ENCODE measurements at regions of chr1 and their contacts with region 1.

Region 1: DNA sequence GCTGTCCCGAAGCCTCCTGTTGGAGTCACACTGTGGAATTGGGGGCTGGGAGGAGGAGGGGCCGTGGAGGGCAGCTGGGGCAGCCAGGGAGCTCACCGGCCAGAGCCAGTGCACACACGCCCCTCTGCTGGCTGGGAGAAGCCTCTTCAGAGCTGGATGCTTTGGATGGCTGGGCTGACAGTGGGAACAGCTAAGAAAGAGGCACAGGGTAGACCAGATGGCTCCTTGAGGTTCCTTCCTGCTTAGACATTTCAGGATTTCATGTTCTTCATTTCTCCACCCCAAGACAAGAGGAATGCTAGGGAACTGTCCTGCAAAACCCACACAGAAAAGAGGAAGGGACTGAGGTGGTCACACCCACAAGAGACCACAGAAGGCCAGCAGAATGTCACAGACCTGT is 254.8 kb upstream of the VAMP3 start:
- DNase-seq: no peak
- ATAC-seq: peak; percentile 55

Region 2: GRCh38 chr1:7290971-7291970 is 225.1 kb before region 1 on chr1:
- intact Hi-C with region 1: loop called (anchors 2 kb)
- DNase-seq: peak; percentile 67
- ATAC-seq: peak; percentile 85

Region 3: DNA sequence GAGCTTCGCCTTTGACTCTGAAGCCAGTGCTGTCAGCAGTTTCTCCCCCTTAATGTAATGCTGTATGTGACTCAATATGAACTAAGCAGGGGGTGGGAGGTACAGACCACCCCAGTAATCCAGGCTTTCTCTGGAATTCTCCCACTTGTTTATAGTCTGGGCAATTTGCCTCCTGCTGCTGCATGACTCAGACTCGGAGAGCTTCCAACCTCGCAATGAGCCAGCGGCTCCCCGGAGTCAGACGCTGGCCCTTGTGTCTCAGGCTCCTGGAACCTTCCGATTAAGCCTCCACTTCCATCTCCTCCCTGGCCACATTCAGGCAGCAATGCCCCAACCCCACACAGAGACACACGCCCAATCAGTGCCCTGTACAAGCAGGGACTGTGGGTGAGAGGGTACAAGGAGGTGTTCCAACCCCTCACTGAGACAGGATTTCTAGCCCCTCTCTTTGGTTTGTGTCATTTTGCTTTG is 217.0 kb before region 1 on chr1:
- intact Hi-C with region 1: loop called (anchors 2 kb)
- DNase-seq: no peak
- ATAC-seq: peak; percentile 87

Region 4: DNA sequence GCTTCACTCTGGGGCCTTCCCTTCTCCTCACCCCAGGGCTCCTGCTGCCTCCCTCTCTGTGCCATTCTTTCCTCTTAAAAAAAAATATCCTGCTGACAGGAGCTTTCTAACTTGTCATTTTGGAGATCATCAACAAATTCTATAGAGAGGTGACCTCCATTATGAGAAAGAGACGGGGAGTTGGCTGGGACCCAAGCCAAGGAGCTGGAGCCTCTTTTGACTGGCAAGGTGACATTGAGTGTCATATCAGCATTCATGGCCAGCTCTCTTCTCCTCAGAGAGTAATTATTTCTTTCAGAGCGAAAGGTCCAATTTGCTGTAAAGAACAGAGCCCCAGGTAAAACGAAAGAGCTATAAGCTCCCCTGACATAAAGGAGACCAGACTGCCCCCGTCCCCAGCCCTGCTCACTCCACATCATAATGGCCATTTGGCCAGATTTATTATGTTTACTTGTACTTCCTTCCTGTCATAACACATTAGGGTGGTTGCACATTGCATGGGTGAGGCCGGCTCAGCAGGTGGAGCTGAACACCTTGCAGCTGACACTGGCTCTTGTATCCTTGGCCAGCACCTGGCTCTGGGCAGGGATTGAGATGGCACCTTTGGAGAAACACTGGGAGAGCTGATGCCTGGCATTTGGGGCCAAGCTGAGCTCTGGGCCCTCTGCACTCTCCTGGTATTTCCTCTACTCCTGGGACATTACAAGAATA is 149.2 kb before region 1 on chr1:
- intact Hi-C with region 1: loop called (anchors 5 kb)
- DNase-seq: no peak
- ATAC-seq: peak; percentile 2

Region 5: GRCh38 chr1:7608628-7609295 is 92.4 kb after region 1 on chr1:
- intact Hi-C with region 1: no loop called
- DNase-seq: no peak
- ATAC-seq: no peak

Measured in Right ventricle myocardium inferior (tissue), 1 donor.